OCI-LY7 (cell line): ENCODE measurements at regions of chr20 and their contacts with region 1.

Region 1: GRCh38 chr20:62121776-62122631 is at the start of gene LSM14B:
- DNase-seq: peak; percentile 97
- H3K4me3 ChIP-seq: peak within 1 kb of the TSS; percentile 88
- H3K27ac ChIP-seq: peak within 1 kb of the TSS; percentile 78
- H3K4me1 ChIP-seq: peaks cover 40% of the 10 kb centered on the region
- CTCF ChIP-seq: no peak
- total RNA-seq, gene LSM14B: 44.7 and 54.2 TPM in 2 replicates

Region 2: GRCh38 chr20:61773081-61773631 is 348.8 kb before region 1 on chr20:
- CTCF ChIA-PET with region 1: no interaction called
- POLR2A ChIA-PET with region 1: no interaction called
- intact Hi-C with region 1: no loop called
- DNase-seq: no peak
- H3K4me3 ChIP-seq: no peak overlapping the region
- H3K27ac ChIP-seq: no peak overlapping the region
- H3K4me1 ChIP-seq: no peaks in the 10 kb centered on the region
- CTCF ChIP-seq: no peak

Region 3: GRCh38 chr20:62002882-62003480 is 119.0 kb before region 1 on chr20:
- CTCF ChIA-PET with region 1: no interaction called
- POLR2A ChIA-PET with region 1: no interaction called
- intact Hi-C with region 1: loop called (anchors 2 kb)
- DNase-seq: no peak
- H3K4me3 ChIP-seq: peak overlapping the region; percentile 56
- H3K27ac ChIP-seq: peak overlapping the region; percentile 79
- H3K4me1 ChIP-seq: peaks cover 36% of the 10 kb centered on the region
- CTCF ChIP-seq: no peak

Region 4: DNA sequence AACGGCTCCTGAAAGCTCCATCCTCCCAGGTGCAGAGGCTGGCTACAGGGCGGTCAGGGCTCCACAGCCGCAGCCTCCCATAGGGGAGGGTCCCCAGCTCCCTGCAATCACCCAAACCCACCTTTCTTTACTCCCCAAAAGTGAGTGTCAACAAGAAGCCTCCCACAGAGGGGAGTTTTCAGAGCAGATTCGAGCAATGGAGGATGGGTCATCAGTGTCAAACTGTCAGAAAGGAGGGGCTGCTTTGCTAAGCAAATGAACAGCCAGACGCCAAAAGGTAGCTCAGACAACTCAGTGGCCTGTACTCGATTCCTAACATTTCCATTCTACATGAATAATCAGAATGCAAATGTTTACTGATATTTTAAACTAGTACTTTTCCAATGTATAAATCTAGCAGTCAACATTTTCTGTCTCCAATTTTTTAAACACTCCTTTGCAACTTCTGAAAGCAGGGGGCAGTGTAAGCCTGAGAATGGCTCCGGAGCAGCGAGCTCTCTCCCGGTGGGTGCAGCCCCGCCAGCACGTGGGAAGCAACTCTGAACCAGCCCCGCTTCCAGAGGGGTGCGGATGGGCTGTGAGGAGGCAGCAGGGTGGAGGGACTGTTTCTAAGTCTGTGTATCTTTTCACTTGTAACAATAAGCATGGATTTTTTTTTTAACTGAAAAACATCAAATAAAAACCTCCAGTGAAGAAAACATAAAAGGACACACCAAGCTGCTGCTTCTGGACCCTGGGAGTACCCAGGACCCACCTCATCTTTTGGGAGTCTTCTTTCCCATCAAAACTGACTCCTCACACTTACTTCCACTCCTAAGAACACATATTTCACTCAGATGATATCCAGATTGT is 111.2 kb before region 1 on chr20:
- CTCF ChIA-PET with region 1: interaction called, 3 read pairs
- POLR2A ChIA-PET with region 1: no interaction called
- intact Hi-C with region 1: loop called (anchors 1 kb)
- DNase-seq: peak; percentile 71
- H3K4me3 ChIP-seq: no peak overlapping the region
- H3K27ac ChIP-seq: peak overlapping the region; percentile 26
- H3K4me1 ChIP-seq: peaks cover 13% of the 10 kb centered on the region
- CTCF ChIP-seq: peak; percentile 96

Region 5: DNA sequence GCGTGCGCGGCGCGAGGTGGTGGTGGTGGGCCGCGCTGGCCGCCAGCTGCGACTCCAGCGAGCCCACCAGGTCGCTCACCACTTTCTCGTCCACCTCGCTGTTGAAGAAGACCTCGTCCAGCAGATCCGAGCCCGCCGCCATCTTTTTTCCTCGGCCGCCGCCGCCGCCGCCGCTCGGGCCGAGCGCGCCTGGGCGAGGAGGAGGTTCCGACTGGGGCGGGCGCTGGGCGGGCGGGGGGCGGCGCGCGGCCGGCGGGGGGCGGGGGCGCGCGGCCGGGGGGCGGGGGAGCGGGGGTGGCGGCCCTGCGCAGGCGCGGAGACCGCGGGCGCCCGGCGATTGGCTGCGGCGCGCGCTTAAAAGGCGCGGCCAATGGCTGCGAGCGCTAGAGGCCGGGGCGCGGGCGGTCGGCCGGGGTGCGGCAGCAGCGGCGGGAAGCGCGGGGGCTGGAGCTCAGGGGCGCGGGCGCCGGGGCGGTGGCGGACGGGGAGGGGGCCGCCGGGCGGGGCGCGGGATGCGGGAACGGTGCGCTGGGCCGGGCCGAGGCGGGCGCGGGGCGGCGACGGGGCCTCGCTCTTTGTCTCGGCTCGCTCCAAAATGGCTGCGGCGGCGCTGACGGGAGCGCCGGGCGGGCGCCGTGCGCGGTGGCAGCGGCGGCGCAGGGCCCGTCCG is 56.2 kb before region 1 on chr20 and contains the start of gene TAF4:
- CTCF ChIA-PET with region 1: interaction called, 4 read pairs
- POLR2A ChIA-PET with region 1: interaction called, 4 read pairs
- intact Hi-C with region 1: loop called (anchors 1 kb)
- DNase-seq: peak; percentile 88
- H3K4me3 ChIP-seq: peak within 1 kb of the TSS; percentile 75
- H3K27ac ChIP-seq: peak within 1 kb of the TSS; percentile 66
- H3K4me1 ChIP-seq: peaks cover 46% of the 10 kb centered on the region
- CTCF ChIP-seq: no peak
- total RNA-seq, gene TAF4: 6.7 and 11.2 TPM in 2 replicates

Region 6: DNA sequence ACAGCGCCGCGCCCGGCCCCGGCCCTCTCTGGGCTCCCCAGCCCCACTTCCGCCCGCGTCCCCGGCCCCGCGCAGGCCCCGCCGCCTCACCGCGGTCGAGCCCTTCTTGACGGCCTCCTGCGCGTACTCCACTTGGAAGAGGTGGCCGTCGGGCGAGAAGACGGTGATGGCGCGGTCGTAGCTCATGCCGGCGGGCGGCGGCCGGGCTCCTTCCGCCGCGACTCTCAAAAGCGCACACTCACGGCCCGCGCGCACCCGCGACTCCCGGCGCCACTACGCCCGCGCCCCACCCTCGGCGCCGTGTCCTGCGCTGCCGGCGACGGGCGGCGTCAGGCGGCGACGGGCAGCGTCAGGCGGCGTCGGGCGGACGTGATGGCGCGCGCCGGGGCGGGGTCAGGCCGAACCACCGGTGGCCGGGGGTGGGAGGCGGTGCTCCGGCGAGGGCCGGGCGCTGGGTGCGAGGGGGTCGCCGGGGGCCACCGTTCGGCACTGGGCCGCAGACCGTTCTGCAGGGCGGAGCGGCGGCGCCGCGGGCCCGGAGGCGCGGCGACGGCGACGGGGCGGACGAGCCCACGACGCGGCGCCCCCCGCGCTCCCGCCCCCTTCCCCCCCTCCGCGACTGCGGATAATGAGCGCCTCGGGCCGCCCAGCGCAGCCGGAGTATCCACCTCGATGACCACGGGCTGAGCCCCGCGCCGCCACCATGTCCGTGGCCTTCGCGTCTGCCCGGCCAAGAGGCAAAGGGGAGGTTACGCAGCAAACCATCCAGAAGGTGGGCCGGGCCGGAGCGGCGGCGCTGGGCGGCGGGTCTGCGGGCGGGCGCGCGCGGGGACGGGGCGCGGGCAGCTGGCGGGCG is 21.3 kb after region 1 on chr20 and contains the starts of genes PSMA7 and SS18L1:
- CTCF ChIA-PET with region 1: no interaction called
- POLR2A ChIA-PET with region 1: interaction called, 5 read pairs
- intact Hi-C with region 1: loop called (anchors 1 kb)
- DNase-seq: peak; percentile 93
- H3K4me3 ChIP-seq: peak within 1 kb of the TSS; percentile 98
- H3K27ac ChIP-seq: peak within 1 kb of the TSS; percentile 37
- H3K4me1 ChIP-seq: peaks cover 25% of the 10 kb centered on the region
- CTCF ChIP-seq: no peak
- total RNA-seq, gene PSMA7: 247 and 362 TPM in 2 replicates
- total RNA-seq, gene SS18L1: 13.0 and 17.0 TPM in 2 replicates

Region 7: DNA sequence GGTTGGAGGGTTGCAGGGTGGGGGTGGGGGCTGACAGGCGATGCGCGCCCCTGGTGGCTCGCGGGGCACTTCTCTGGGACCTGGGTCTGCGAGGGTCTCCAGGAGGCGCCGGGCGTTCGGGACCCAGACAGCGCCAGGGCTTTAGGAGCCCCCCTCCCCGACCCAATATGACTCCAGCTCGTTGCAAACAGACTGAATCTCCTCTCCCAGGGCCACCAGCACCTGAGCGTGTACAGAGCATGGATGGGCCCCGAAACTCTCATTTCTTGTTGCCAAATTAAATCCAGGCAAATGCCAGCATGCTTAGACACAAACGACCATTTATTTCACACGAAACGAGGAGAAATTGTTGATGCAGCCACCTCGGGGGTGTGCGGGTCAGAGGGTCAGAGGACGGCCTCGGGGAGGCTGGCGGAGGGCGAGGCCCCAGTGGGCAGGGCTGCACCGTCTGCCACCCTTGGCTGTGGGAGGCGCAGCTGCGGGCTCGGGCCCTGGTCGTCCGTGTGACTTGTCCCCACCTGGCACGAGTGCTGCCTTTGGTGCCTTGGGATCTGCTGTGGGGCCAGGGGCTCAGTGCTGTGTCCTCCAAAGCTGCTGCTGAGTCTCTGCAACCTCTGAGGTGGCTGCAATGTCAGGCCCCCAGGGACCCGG is 374.7 kb after region 1 on chr20:
- CTCF ChIA-PET with region 1: no interaction called
- POLR2A ChIA-PET with region 1: no interaction called
- intact Hi-C with region 1: no loop called
- DNase-seq: peak; percentile 72
- H3K4me3 ChIP-seq: no peak overlapping the region
- H3K27ac ChIP-seq: no peak overlapping the region
- H3K4me1 ChIP-seq: peaks cover 37% of the 10 kb centered on the region
- CTCF ChIP-seq: peak; percentile 76